ENCODE measurements at regions of chr3 and their contacts with region 1.

Region 1: DNA sequence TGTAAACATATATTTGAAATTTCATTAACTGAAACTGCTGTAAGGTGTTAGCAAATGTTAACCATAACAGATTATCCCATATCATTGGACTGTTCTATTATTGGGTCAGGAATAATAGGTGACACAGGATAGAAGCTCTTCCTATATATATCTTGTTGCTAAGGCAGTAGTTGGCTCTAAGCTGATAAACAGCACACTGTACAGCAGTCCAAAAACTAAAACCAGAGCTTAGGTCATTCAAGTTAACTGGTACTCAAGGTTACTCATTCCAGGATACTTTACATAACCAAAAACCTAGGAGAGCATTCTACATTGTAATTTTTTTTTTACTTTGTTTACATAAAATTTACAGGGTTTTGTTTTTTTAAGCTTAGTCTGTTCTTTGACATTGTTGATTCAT is 8.9 kb downstream of the DNAJC19 start:
- DNase-seq: no peak
- H3K4me3 ChIP-seq: no peak overlapping the region
- H3K27ac ChIP-seq: no peak overlapping the region
- H3K4me1 ChIP-seq: peaks cover 0 to 6% (median 0%) of the 10 kb centered on the region in 4 donors
- H3K27me3 ChIP-seq: no peaks in the 10 kb centered on the region
- CTCF ChIP-seq: no peak
- EP300 ChIP-seq: no peak
- POLR2A ChIP-seq: no peak

Region 2: DNA sequence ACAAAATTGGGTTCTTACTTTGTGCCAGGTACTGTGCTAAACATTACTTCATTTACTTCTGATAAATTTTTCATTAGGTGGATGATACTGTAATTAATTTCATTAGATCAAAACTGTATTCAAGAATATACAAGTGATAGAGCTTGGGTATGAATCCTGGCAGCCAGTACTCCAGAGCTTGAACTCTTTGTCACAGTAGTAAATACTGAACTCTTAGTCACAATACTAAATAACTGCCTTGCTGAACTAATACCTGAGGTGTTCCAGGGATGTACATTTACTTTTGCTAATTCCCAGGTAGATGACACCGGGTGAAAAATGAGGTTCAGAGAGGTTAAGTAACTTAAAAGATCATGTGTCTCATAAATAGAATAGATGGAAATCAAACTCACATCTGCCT is 47.8 kb before region 1 on chr3:
- in situ Hi-C with region 1: no loop called
- intact Hi-C with region 1: loop called (anchors 1 kb)
- DNase-seq: no peak
- H3K4me3 ChIP-seq: no peak overlapping the region
- H3K27ac ChIP-seq: no peak overlapping the region
- H3K4me1 ChIP-seq: peaks cover 0 to 28% (median 9%) of the 10 kb centered on the region in 4 donors
- H3K27me3 ChIP-seq: no peaks in the 10 kb centered on the region
- CTCF ChIP-seq: no peak
- EP300 ChIP-seq: no peak
- POLR2A ChIP-seq: no peak

Region 3: GRCh38 chr3:181134873-181135272 is 154.3 kb after region 1 on chr3:
- in situ Hi-C with region 1: no loop called
- intact Hi-C with region 1: no loop called
- DNase-seq: no peak
- H3K4me3 ChIP-seq: no peak overlapping the region
- H3K27ac ChIP-seq: no peak overlapping the region
- H3K4me1 ChIP-seq: no peaks in the 10 kb centered on the region
- H3K27me3 ChIP-seq: no peaks in the 10 kb centered on the region
- CTCF ChIP-seq: no peak
- EP300 ChIP-seq: no peak
- POLR2A ChIP-seq: no peak